CD4-positive, alpha-beta memory T cell (primary cell): ENCODE measurements at regions of chr6 and their contacts with region 1.

Region 1: GRCh38 chr6:57316581-57317059 is 810 bp upstream of the PRIM2 start:
- DNase-seq: peak; percentile 83 to 85 (median 84)
- H3K4me3 ChIP-seq: peak overlapping the region; percentile 80 to 83
- H3K4me3 Mint-ChIP-seq: peak overlapping the region; percentile 95 to 100 (median 99)
- H3K27ac ChIP-seq: peak overlapping the region; percentile 61
- H3K27ac Mint-ChIP-seq: peak overlapping the region; percentile 82 to 97 (median 96)
- H3K4me1 ChIP-seq: peaks cover 18% of the 10 kb centered on the region
- H3K4me1 Mint-ChIP-seq: peaks cover 26 to 35% (median 30%) of the 10 kb centered on the region in 4 donors
- H3K27me3 ChIP-seq: no peaks in the 10 kb centered on the region
- H3K27me3 Mint-ChIP-seq: peaks cover 2% of the 10 kb centered on the region in 2 donors

Region 2: DNA sequence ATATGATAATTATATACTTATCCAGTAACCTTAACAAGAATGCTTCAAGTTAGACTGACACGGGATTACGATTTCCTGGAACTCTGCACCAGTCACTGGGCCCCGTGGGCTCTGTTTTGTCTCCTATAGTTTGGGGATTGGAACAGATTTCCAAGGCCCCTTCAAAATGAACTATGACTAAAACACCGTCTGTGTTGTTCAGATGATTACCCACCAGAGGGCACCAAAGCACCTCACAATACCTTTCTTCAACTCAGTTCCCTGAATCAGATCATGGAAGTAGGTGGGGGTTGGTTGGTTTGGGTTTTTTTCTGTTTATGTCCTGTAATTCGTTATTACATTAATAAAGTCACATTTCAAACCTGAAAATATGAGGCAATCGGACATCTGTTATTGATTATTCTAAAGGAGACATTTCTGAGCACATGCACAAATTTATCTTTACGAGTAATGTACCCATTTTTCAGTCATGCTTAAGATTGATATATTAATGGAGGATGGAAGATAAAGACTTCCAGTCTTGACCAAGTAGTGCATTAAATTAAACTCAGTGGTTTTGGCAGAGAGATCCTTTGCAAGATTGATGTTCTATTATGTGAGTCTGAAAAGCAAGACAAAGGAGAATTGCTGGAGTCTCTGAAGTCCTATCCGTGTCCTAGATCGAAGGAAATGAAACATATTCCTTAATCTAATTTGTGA is 957.3 kb before region 1 on chr6:
- CTCF ChIA-PET with region 1: interaction called, 3 read pairs
- POLR2A ChIA-PET with region 1: no interaction called
- intact Hi-C with region 1: loop called (anchors 2 kb)
- DNase-seq: peak; percentile 38 to 55 (median 46)
- H3K4me3 ChIP-seq: no peak overlapping the region
- H3K4me3 Mint-ChIP-seq: no peak overlapping the region
- H3K27ac ChIP-seq: no peak overlapping the region
- H3K27ac Mint-ChIP-seq: no peak overlapping the region
- H3K4me1 ChIP-seq: no peaks in the 10 kb centered on the region
- H3K4me1 Mint-ChIP-seq: no peaks in the 10 kb centered on the region
- H3K27me3 ChIP-seq: no peaks in the 10 kb centered on the region
- H3K27me3 Mint-ChIP-seq: no peaks in the 10 kb centered on the region

Region 3: DNA sequence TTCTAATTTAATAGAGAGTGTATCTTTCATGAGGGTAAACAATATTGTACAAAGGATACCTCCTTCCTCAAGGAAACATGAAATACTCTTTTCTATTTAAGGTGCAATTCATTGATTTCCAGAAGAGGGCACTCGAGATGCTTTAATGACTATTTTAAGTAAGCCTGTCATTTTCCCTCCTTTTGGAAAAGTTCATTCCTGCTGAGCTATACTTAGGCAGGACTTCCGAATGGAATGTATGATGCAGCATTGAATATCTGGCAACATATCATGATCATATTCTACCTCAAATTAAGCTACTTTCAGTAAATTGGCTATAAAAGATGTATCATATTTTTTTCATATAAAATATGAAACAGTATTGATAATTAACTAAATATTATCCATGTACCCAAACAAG is 679.0 kb before region 1 on chr6:
- CTCF ChIA-PET with region 1: interaction called, 3 read pairs
- POLR2A ChIA-PET with region 1: interaction called, 4 read pairs
- intact Hi-C with region 1: loop called (anchors 1 kb)
- DNase-seq: peak in 2 of 5 donors; percentile 1 to 3
- H3K4me3 ChIP-seq: no peak overlapping the region
- H3K4me3 Mint-ChIP-seq: no peak overlapping the region
- H3K27ac ChIP-seq: no peak overlapping the region
- H3K27ac Mint-ChIP-seq: no peak overlapping the region
- H3K4me1 ChIP-seq: no peaks in the 10 kb centered on the region
- H3K4me1 Mint-ChIP-seq: no peaks in the 10 kb centered on the region
- H3K27me3 ChIP-seq: no peaks in the 10 kb centered on the region
- H3K27me3 Mint-ChIP-seq: no peaks in the 10 kb centered on the region

Region 4: GRCh38 chr6:56955171-56956045 is 361.2 kb before region 1 on chr6:
- CTCF ChIA-PET with region 1: interaction called, 3 read pairs
- POLR2A ChIA-PET with region 1: no interaction called
- intact Hi-C with region 1: loop called (anchors 2 kb)
- DNase-seq: peak in 4 of 5 donors; percentile 11 to 57 (median 26)
- H3K4me3 ChIP-seq: peak overlapping the region; percentile 13 to 37
- H3K4me3 Mint-ChIP-seq: peak overlapping the region; percentile 74 to 88 (median 84)
- H3K27ac ChIP-seq: no peak overlapping the region
- H3K27ac Mint-ChIP-seq: peak overlapping the region in 1 of 7 donors; percentile 43
- H3K4me1 ChIP-seq: peaks cover 19% of the 10 kb centered on the region
- H3K4me1 Mint-ChIP-seq: peaks cover 9 to 27% (median 20%) of the 10 kb centered on the region in 4 donors
- H3K27me3 ChIP-seq: peaks cover 19% of the 10 kb centered on the region
- H3K27me3 Mint-ChIP-seq: peaks cover 40 to 61% of the 10 kb centered on the region in 2 donors

Region 5: GRCh38 chr6:57048577-57048976 is 268.0 kb before region 1 on chr6:
- CTCF ChIA-PET with region 1: interaction called, 4 read pairs
- POLR2A ChIA-PET with region 1: no interaction called
- intact Hi-C with region 1: loop called (anchors 1 kb)
- DNase-seq: no peak
- H3K4me3 ChIP-seq: no peak overlapping the region
- H3K4me3 Mint-ChIP-seq: peak overlapping the region in 7 of 8 donors; percentile 3 to 76 (median 64)
- H3K27ac ChIP-seq: no peak overlapping the region
- H3K27ac Mint-ChIP-seq: peak overlapping the region in 3 of 7 donors; percentile 15 to 62 (median 23)
- H3K4me1 ChIP-seq: peaks cover 26% of the 10 kb centered on the region
- H3K4me1 Mint-ChIP-seq: peaks cover 19 to 40% (median 26%) of the 10 kb centered on the region in 4 donors
- H3K27me3 ChIP-seq: no peaks in the 10 kb centered on the region
- H3K27me3 Mint-ChIP-seq: no peaks in the 10 kb centered on the region

Region 6: DNA sequence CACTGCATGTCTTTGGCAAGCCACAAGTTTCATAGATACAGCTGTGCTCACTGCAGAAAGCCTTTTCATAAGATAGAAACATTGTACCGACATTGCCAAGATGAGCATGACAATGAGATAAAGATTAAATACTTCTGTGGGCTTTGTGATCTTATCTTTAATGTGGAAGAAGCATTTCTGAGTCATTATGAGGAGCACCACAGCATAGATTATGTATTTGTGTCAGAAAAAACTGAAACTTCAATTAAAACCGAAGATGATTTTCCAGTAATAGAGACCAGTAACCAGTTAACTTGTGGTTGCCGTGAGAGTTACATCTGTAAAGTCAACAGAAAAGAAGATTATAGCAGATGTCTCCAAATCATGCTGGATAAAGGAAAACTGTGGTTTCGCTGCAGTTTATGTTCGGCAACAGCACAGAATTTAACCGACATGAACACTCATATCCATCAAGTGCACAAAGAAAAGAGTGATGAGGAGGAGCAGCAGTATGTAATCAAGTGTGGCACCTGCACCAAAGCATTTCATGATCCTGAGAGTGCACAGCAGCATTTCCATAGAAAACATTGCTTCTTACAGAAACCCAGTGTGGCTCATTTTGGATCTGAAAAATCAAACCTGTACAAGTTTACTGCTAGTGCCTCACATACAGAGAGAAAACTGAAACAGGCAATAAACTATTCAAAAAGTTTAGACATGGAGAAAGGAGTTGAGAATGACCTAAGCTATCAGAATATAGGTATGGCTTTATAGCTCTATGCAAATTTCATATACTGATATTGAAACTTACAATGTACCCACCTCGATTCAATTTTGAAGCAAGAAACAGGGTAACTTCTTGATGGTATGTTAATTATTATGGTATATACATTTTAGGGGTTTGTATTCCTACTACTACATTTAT is 168.4 kb before region 1 on chr6:
- CTCF ChIA-PET with region 1: no interaction called
- POLR2A ChIA-PET with region 1: no interaction called
- intact Hi-C with region 1: no loop called
- DNase-seq: no peak
- H3K4me3 ChIP-seq: no peak overlapping the region
- H3K4me3 Mint-ChIP-seq: no peak overlapping the region
- H3K27ac ChIP-seq: no peak overlapping the region
- H3K27ac Mint-ChIP-seq: peak overlapping the region in 4 of 7 donors; percentile 7 to 58 (median 40)
- H3K4me1 ChIP-seq: peaks cover 10% of the 10 kb centered on the region
- H3K4me1 Mint-ChIP-seq: peaks cover 13 to 21% (median 15%) of the 10 kb centered on the region in 4 donors
- H3K27me3 ChIP-seq: no peaks in the 10 kb centered on the region
- H3K27me3 Mint-ChIP-seq: no peaks in the 10 kb centered on the region

Region 7: DNA sequence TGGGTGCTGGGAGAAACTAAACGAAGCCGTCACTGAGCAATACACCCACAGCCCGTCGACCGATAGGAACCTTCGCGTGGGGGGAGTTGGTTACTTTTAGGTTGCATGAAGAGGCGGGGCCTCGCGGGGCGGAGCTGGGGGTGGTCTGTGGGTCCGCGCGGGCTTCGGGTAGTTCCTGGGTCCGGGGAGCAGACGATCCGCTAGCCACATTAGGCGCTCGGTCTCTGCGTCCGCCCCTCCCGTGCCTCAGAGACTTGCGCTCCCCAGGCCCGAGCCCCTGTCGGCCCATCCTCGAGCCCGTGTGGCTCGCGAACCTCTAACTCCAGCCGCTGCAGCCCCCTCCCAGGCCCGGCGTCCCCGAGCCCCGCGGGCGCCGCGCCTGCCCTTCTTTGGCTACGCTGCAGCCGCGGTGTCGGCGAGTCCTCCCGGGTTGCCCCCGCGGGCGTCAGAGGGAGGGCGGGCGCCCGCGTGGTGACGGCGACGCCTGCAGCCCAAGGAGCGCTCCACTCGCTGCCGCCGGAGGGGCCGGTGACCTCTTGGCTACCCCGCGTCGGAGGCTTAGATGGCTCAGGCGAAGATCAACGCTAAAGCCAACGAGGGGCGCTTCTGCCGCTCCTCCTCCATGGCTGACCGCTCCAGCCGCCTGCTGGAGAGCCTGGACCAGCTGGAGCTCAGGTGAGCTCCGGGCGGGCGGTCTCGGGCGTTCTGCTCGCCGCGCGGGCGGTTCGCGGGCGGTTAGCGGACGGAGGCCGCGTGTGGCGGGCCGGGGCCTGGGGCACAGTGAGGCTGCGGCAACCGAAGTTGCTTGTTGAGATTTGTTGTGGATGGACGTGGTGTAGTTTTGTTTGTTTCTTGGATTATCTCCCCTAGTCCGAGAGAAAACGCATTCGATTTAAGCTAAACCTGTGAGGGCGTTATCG is 144.2 kb before region 1 on chr6 and contains the start of gene BAG2:
- CTCF ChIA-PET with region 1: no interaction called
- POLR2A ChIA-PET with region 1: interaction called, 5 read pairs
- intact Hi-C with region 1: loop called (anchors 1 kb)
- DNase-seq: peak; percentile 83 to 93 (median 83)
- H3K4me3 ChIP-seq: peak within 1 kb of the TSS; percentile 55 to 71
- H3K4me3 Mint-ChIP-seq: peak within 1 kb of the TSS; percentile 88 to 96 (median 92)
- H3K27ac ChIP-seq: peak within 1 kb of the TSS; percentile 57
- H3K27ac Mint-ChIP-seq: peak within 1 kb of the TSS; percentile 78 to 98 (median 94)
- H3K4me1 ChIP-seq: peaks cover 13% of the 10 kb centered on the region
- H3K4me1 Mint-ChIP-seq: peaks cover 19 to 45% (median 27%) of the 10 kb centered on the region in 4 donors
- H3K27me3 ChIP-seq: no peaks in the 10 kb centered on the region
- H3K27me3 Mint-ChIP-seq: no peaks in the 10 kb centered on the region
- total RNA-seq, gene BAG2: 3.5 to 3.7 TPM

Region 8: DNA sequence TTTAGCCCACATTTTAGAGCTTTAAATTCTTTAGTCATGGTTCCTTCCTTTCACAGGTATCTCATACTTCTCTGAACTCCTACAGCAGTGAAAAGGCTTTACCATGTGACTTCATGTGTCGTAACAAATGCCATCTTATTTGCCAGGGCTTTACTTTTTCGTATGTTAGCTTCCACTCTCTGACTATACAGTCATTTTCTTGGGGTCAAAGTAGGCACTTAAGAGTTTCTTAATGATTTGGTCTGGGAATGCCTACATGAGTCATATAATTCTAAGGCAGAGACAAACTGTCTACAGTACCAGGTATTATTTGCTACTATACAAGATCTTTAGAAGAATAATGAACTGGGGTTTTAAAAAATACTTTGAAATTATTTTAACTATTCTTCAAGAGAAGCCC is 109.5 kb before region 1 on chr6:
- CTCF ChIA-PET with region 1: no interaction called
- POLR2A ChIA-PET with region 1: no interaction called
- intact Hi-C with region 1: no loop called
- DNase-seq: no peak
- H3K4me3 ChIP-seq: no peak overlapping the region
- H3K4me3 Mint-ChIP-seq: no peak overlapping the region
- H3K27ac ChIP-seq: no peak overlapping the region
- H3K27ac Mint-ChIP-seq: no peak overlapping the region
- H3K4me1 ChIP-seq: no peaks in the 10 kb centered on the region
- H3K4me1 Mint-ChIP-seq: peaks cover 0 to 2% (median 0%) of the 10 kb centered on the region in 4 donors
- H3K27me3 ChIP-seq: no peaks in the 10 kb centered on the region
- H3K27me3 Mint-ChIP-seq: no peaks in the 10 kb centered on the region

Region 9: GRCh38 chr6:57221936-57222742 is 94.5 kb before region 1 on chr6 and contains the start of gene RAB23:
- CTCF ChIA-PET with region 1: interaction called, 3 read pairs
- POLR2A ChIA-PET with region 1: interaction called, 5 read pairs
- intact Hi-C with region 1: loop called (anchors 1 kb)
- DNase-seq: peak; percentile 72 to 89 (median 85)
- H3K4me3 ChIP-seq: peak within 1 kb of the TSS; percentile 64 to 96
- H3K4me3 Mint-ChIP-seq: peak within 1 kb of the TSS; percentile 98 to 100 (median 98)
- H3K27ac ChIP-seq: peak within 1 kb of the TSS; percentile 35
- H3K27ac Mint-ChIP-seq: peak within 1 kb of the TSS; percentile 87 to 97 (median 93)
- H3K4me1 ChIP-seq: peaks cover 10% of the 10 kb centered on the region
- H3K4me1 Mint-ChIP-seq: peaks cover 6 to 10% (median 9%) of the 10 kb centered on the region in 4 donors
- H3K27me3 ChIP-seq: peaks cover 5% of the 10 kb centered on the region
- H3K27me3 Mint-ChIP-seq: peaks cover 13 to 27% of the 10 kb centered on the region in 2 donors
- total RNA-seq, gene RAB23: 1.4 to 1.6 TPM

Region 10: DNA sequence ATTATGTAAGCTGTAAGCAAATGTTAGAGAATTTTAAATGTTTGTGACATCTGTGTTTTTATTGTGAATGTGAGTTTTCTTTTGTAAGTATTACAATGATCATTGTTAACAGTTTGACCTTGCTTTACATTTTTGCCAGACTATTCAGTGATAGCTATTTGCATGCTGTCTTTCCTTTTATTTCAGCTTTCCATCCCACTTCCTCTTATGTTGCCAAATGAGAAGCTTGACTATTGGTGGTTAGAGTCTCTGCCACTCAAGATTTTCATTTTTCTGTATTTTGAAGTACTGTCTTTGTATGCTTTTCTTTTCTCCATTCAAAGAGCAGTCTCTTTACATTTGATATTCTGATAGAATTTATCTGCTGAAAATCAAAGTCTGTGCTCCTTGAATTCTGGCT is 104.9 kb after region 1 on chr6:
- CTCF ChIA-PET with region 1: no interaction called
- POLR2A ChIA-PET with region 1: no interaction called
- intact Hi-C with region 1: no loop called
- DNase-seq: no peak
- H3K4me3 ChIP-seq: no peak overlapping the region
- H3K4me3 Mint-ChIP-seq: no peak overlapping the region
- H3K27ac ChIP-seq: no peak overlapping the region
- H3K27ac Mint-ChIP-seq: peak overlapping the region in 1 of 7 donors; percentile 18
- H3K4me1 ChIP-seq: no peaks in the 10 kb centered on the region
- H3K4me1 Mint-ChIP-seq: peaks cover 0 to 6% (median 3%) of the 10 kb centered on the region in 4 donors
- H3K27me3 ChIP-seq: no peaks in the 10 kb centered on the region
- H3K27me3 Mint-ChIP-seq: no peaks in the 10 kb centered on the region